ENCODE measurements at regions of chr7 and their contacts with region 1.

Region 1: GRCh38 chr7:47337531-47337930 is 244.4 kb downstream of the TNS3 start:
- DNase-seq: no peak

Region 2: DNA sequence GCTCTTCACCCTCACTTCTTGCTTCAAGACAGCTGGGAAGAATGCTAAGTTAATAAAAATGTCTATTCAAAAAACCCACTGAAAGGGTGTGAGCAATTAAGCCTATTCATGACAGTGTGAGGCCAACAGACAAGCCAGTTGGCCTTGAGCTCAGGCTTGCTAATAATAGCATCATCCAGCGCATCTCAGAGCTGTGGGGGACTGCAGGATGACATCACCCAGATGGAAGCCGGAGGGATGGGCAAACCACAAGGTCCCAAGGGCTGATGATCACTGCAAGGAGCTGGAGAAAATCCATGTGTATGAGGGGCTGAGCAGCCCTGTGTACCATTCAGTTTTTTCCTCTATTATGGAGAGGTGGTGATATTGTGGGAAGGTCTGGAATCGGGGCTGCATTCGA is 526.0 kb before region 1 on chr7:
- intact Hi-C with region 1: no loop called
- DNase-seq: peak; percentile 79

Region 3: GRCh38 chr7:47371729-47372368 is 34.3 kb after region 1 on chr7:
- intact Hi-C with region 1: loop called (anchors 5 kb)
- DNase-seq: peak; percentile 91

Region 4: GRCh38 chr7:47474937-47475878 is 137.7 kb after region 1 on chr7:
- intact Hi-C with region 1: loop called (anchors 10 kb)
- DNase-seq: peak; percentile 91

Measured in cardiac septum (tissue), 1 donor.